Naive thymus-derived CD4-positive, alpha-beta T cell (primary cell): ENCODE measurements at regions of chr11 and their contacts with region 1.

Region 1: GRCh38 chr11:85854557-85855340 is 434 bp upstream of the CCDC83 start:
- DNase-seq: peak; percentile 81 to 97 (median 90)
- ATAC-seq: peak; percentile 99
- H3K4me3 ChIP-seq: peak overlapping the region; percentile 71
- H3K4me3 Mint-ChIP-seq: peak overlapping the region; percentile 79 to 95 (median 94)
- H3K27ac ChIP-seq: peak overlapping the region; percentile 84
- H3K27ac Mint-ChIP-seq: peak overlapping the region; percentile 85 to 98 (median 95)
- H3K4me1 ChIP-seq: peaks cover 6 to 9% of the 10 kb centered on the region in 2 donors
- H3K4me1 Mint-ChIP-seq: peaks cover 0 to 15% (median 13%) of the 10 kb centered on the region in 7 donors
- H3K27me3 ChIP-seq: no peaks in the 10 kb centered on the region
- H3K27me3 Mint-ChIP-seq: peaks cover 0 to 7% (median 0%) of the 10 kb centered on the region in 5 donors

Region 2: DNA sequence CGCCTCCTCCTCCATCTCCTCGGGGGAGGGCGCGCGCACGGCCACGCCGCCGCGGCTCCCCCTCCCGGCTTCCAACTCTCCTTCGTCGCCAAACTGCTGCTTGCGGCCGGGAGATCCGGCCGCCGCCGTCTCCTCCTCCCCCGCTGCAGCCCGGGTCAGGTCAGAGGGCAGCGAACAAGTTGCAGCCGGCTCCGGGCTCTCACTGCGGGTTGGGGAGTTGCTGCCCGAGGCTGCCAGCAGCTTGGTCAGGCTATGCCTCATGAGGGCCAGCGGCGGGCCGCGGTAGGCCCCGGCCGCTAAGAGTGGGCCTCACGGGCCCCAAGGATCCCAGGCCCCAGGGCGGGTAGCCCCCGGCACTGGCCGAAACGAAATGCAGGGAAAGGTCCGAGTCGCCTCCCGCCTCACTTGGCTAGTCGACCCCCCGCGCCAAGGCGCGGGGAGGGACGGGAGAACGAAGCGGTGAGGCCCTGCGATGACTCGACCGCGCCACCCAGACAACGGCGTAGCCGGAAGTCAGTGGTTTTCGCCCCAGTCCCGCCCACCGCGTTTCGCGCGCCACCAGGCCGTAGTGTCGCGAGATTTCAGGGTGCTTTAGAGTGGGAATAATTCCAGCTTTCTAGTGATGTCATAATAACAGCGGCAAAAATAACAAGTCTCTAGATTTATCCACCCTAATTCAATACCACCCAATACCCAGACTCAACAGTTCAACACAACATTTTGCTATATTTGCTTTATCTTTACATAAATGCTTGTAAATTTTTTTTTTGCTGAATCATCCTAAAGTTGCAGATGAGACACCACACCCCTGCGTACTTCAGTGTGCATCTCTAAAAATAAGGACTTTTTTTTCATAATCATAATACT is 189.9 kb before region 1 on chr11 and contains the start of gene CREBZF:
- CTCF ChIA-PET with region 1: no interaction called
- POLR2A ChIA-PET with region 1: interaction called, 4 read pairs
- intact Hi-C with region 1: loop called (anchors 1 kb)
- DNase-seq: peak; percentile 83 to 96 (median 92)
- ATAC-seq: peak; percentile 85
- H3K4me3 ChIP-seq: peak within 1 kb of the TSS; percentile 97
- H3K4me3 Mint-ChIP-seq: peak within 1 kb of the TSS; percentile 93 to 100 (median 99)
- H3K27ac ChIP-seq: peak within 1 kb of the TSS; percentile 99
- H3K27ac Mint-ChIP-seq: peak within 1 kb of the TSS; percentile 96 to 100 (median 99)
- H3K4me1 ChIP-seq: peaks cover 19 to 31% of the 10 kb centered on the region in 2 donors
- H3K4me1 Mint-ChIP-seq: peaks cover 29 to 55% (median 39%) of the 10 kb centered on the region in 7 donors
- H3K27me3 ChIP-seq: no peaks in the 10 kb centered on the region
- H3K27me3 Mint-ChIP-seq: peaks cover 0 to 5% (median 0%) of the 10 kb centered on the region in 5 donors
- total RNA-seq, gene CREBZF: 56.9 to 114 (median 59.7) TPM

Region 3: DNA sequence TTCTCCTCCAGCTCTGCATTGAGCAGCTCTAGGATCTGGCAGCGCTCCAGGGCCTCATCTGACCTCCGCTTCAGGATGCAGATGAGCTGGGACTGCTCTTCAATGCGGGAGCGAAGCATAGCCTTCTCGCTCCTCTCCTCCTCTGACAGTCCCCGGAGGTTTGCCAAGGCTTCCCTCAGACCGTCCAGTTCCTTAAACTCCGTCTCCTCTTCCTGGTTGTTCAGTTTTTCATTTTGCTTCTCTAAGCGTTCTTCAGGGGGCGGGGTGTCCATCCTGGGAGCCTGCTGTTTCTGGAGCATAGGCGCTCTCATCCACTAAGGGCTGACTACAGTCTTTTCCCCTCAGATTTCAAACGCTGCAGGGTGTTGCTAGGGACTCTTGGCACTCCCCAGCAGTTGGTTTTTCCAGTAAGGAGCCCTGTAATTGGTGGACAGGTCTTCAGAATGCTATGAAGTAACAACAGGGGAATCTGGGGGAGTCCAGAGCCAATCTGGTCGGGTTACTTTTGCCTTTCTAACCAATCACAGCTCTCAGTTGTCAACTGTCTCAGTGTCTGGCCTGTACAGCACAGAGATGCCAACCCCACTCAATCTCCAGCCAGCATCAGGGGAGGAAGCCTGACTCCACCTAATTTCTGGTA is 168.8 kb before region 1 on chr11 and contains the start of gene CCDC89:
- CTCF ChIA-PET with region 1: no interaction called
- POLR2A ChIA-PET with region 1: no interaction called
- intact Hi-C with region 1: no loop called
- DNase-seq: no peak
- ATAC-seq: no peak
- H3K4me3 ChIP-seq: no peak within 1 kb of the TSS
- H3K4me3 Mint-ChIP-seq: peak within 1 kb of the TSS in 2 of 10 donors; percentile 12 to 29
- H3K27ac ChIP-seq: no peak within 1 kb of the TSS
- H3K27ac Mint-ChIP-seq: peak within 1 kb of the TSS in 4 of 9 donors; percentile 3 to 87 (median 46)
- H3K4me1 ChIP-seq: no peaks in the 10 kb centered on the region
- H3K4me1 Mint-ChIP-seq: peaks cover 10 to 28% (median 14%) of the 10 kb centered on the region in 7 donors
- H3K27me3 ChIP-seq: no peaks in the 10 kb centered on the region
- H3K27me3 Mint-ChIP-seq: peaks cover 0 to 3% (median 0%) of the 10 kb centered on the region in 5 donors
- total RNA-seq, gene CCDC89: 0.73 to 1.2 TPM in 2 of 5 experiments, not detected in the others

Region 4: DNA sequence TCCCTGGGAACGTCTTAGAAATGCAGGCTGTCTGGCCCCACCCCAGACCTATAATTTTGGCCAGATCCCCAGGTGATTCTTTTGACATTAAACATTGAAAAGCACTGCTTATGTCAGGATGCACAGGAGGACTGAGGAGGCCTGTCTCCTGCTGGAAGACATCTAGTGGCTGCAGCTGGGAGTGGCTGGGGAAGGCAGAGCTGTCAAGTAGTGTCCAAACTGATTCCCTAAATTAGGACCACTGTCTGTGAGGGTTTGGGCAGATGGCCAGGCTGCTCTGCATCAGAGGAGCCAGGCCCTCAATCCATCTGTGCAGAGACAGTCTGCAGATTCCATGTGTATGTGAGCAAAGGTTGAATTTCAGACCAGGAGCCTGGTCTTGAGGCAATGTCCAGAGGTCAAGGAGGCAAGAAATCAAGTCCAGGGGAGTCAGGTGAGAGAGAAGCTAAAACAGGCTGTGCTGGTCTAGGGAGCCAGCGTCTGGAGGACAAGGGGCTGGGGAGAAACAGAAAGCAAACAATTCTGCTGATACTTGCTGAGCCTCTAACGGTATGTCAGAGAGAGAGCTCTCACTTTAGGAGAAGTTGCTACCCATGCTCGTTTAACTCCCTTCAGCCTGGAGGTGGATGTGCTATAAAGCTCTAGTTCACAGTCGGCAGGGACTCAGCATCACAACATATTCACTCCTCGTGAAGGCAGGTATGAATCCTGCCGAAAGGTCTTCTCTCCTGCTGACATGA is 28.5 kb before region 1 on chr11:
- CTCF ChIA-PET with region 1: interaction called, 7 read pairs
- POLR2A ChIA-PET with region 1: interaction called, 5 read pairs
- intact Hi-C with region 1: loop called (anchors 1 kb)
- DNase-seq: peak in 3 of 9 donors; percentile 24 to 39 (median 28)
- ATAC-seq: no peak
- H3K4me3 ChIP-seq: no peak overlapping the region
- H3K4me3 Mint-ChIP-seq: peak overlapping the region in 9 of 10 donors; percentile 11 to 65 (median 40)
- H3K27ac ChIP-seq: no peak overlapping the region
- H3K27ac Mint-ChIP-seq: peak overlapping the region; percentile 59 to 100 (median 93)
- H3K4me1 ChIP-seq: peaks cover 55 to 57% of the 10 kb centered on the region in 2 donors
- H3K4me1 Mint-ChIP-seq: peaks cover 28 to 72% (median 64%) of the 10 kb centered on the region in 7 donors
- H3K27me3 ChIP-seq: no peaks in the 10 kb centered on the region
- H3K27me3 Mint-ChIP-seq: no peaks in the 10 kb centered on the region

Region 5: GRCh38 chr11:86068951-86069407 is 214.2 kb after region 1 on chr11 and contains the start of gene PICALM:
- CTCF ChIA-PET with region 1: interaction called, 3 read pairs
- POLR2A ChIA-PET with region 1: no interaction called
- intact Hi-C with region 1: loop called (anchors 1 to 2 kb)
- DNase-seq: peak; percentile 88 to 96 (median 95)
- ATAC-seq: peak; percentile 93
- H3K4me3 ChIP-seq: peak within 1 kb of the TSS; percentile 82
- H3K4me3 Mint-ChIP-seq: peak within 1 kb of the TSS; percentile 95 to 100 (median 98)
- H3K27ac ChIP-seq: peak within 1 kb of the TSS; percentile 89
- H3K27ac Mint-ChIP-seq: peak within 1 kb of the TSS; percentile 92 to 97 (median 96)
- H3K4me1 ChIP-seq: peaks cover 14 to 16% of the 10 kb centered on the region in 2 donors
- H3K4me1 Mint-ChIP-seq: peaks cover 33 to 39% (median 36%) of the 10 kb centered on the region in 7 donors
- H3K27me3 ChIP-seq: no peaks in the 10 kb centered on the region
- H3K27me3 Mint-ChIP-seq: no peaks in the 10 kb centered on the region
- total RNA-seq, gene PICALM: 96.7 to 230 (median 102) TPM

Region 6: DNA sequence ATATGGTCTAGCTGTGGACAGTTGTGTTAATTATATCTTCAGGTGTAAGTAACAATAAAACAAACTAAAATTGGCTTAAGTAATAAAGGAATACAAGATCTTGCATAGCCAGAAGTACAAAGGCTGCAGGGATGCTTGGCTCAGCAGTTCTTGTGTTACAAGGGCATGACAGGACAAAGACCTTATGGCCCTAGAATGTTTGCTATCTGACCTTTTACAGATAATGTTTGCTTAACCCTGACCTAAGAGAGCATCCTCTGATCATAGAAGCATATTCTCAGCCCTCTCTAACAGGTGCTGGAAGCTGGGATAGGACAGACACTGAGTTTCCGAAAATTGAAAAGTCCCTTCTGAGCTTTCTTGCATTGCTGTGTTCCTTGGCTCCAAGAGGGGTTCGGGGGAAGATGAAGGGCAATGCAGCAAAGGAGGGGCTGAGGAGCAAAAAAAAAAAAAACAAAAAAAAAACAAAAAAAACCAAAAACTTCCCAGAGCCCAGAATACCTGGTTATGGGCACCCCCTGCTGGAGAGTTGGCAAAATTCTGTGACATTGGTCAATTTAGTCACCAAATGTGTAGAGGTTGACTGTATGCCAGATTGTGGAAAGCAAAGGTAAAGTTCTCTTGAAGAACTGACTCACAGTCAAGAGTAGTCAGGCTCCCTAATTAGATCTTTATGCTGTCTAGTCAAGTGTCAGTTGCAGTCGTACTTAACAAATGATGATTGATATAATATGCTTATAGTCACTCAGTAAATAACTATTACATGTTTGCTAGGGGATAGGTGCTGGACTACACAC is 436.9 kb after region 1 on chr11:
- CTCF ChIA-PET with region 1: interaction called, 11 read pairs
- POLR2A ChIA-PET with region 1: no interaction called
- intact Hi-C with region 1: loop called (anchors 1 to 2 kb)
- DNase-seq: peak; percentile 11 to 63 (median 49)
- ATAC-seq: peak; percentile 76
- H3K4me3 ChIP-seq: no peak overlapping the region
- H3K4me3 Mint-ChIP-seq: peak overlapping the region in 1 of 10 donors; percentile 23
- H3K27ac ChIP-seq: no peak overlapping the region
- H3K27ac Mint-ChIP-seq: peak overlapping the region in 1 of 9 donors; percentile 35
- H3K4me1 ChIP-seq: peaks cover 0 to 27% of the 10 kb centered on the region in 2 donors
- H3K4me1 Mint-ChIP-seq: peaks cover 5 to 47% (median 9%) of the 10 kb centered on the region in 7 donors
- H3K27me3 ChIP-seq: no peaks in the 10 kb centered on the region
- H3K27me3 Mint-ChIP-seq: no peaks in the 10 kb centered on the region

Region 7: GRCh38 chr11:86818466-86819192 is 963.9 kb after region 1 on chr11:
- CTCF ChIA-PET with region 1: no interaction called
- POLR2A ChIA-PET with region 1: no interaction called
- intact Hi-C with region 1: loop called in 1 of 2 experiments (anchors 1 kb)
- DNase-seq: peak in 7 of 9 donors; percentile 13 to 42 (median 34)
- ATAC-seq: peak; percentile 56
- H3K4me3 ChIP-seq: no peak overlapping the region
- H3K4me3 Mint-ChIP-seq: no peak overlapping the region
- H3K27ac ChIP-seq: no peak overlapping the region
- H3K27ac Mint-ChIP-seq: peak overlapping the region in 1 of 9 donors; percentile 39
- H3K4me1 ChIP-seq: no peaks in the 10 kb centered on the region
- H3K4me1 Mint-ChIP-seq: peaks cover 0 to 7% (median 5%) of the 10 kb centered on the region in 7 donors
- H3K27me3 ChIP-seq: no peaks in the 10 kb centered on the region
- H3K27me3 Mint-ChIP-seq: peaks cover 3 to 31% (median 13%) of the 10 kb centered on the region in 5 donors